ENCODE measurements at regions of chr13 and their contacts with region 1.

Region 1: GRCh38 chr13:23871616-23872220 is 17.5 kb downstream of the MIPEP start:
- DNase-seq: no peak
- H3K4me3 Mint-ChIP-seq: no peak overlapping the region
- H3K27ac Mint-ChIP-seq: no peak overlapping the region
- H3K4me1 Mint-ChIP-seq: no peaks in the 10 kb centered on the region
- H3K27me3 Mint-ChIP-seq: no peaks in the 10 kb centered on the region

Region 2: DNA sequence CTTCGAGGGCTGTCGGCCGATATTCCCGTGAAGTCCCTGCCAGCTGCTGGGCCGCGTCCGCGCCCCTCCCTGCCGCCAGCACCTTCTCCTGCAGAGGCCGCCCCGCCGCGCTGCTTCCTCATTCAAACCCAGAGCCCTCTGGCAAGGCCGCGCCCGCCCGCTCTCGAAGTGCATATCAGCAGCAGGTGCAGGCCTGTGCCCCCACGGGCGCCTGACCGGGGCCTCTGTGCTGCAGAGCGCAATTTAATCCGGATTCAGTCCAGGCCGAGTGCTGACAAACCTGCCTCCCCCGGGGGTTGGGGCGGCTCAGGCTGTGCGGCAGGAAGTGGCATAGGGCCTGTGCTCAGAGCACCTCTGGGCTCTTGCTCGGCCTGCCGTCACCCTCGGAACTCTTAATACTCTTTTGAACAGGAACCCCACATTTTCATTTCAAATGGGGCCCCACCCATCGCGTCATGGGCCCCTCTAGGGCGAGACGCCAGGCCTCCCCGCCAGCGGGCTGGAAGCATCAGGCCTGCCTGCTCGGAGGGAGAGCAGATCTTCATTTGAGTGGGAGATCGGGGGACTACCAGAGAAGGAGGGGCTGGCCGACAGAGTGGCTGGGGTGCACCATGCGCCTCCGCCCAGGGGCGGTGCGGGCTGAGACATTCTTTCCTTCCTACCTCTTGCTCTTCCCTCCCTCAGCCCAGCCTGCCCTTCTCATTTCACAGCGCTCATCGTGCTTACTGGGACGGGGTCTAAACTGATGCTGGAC is 175.8 kb before region 1 on chr13:
- intact Hi-C with region 1: no loop called
- DNase-seq: peak; percentile 49
- H3K4me3 Mint-ChIP-seq: peak overlapping the region; percentile 63
- H3K27ac Mint-ChIP-seq: peak overlapping the region; percentile 78
- H3K4me1 Mint-ChIP-seq: peaks cover 10% of the 10 kb centered on the region
- H3K27me3 Mint-ChIP-seq: no peaks in the 10 kb centered on the region

Region 3: GRCh38 chr13:23715762-23716235 is 155.9 kb before region 1 on chr13:
- intact Hi-C with region 1: loop called (anchors 5 kb)
- DNase-seq: no peak
- H3K4me3 Mint-ChIP-seq: no peak overlapping the region
- H3K27ac Mint-ChIP-seq: no peak overlapping the region
- H3K4me1 Mint-ChIP-seq: peaks cover 13% of the 10 kb centered on the region
- H3K27me3 Mint-ChIP-seq: peaks cover 19% of the 10 kb centered on the region

Region 4: GRCh38 chr13:23899555-23899954 is 27.8 kb after region 1 on chr13:
- intact Hi-C with region 1: loop called (anchors 2 kb)
- DNase-seq: no peak
- H3K4me3 Mint-ChIP-seq: no peak overlapping the region
- H3K27ac Mint-ChIP-seq: no peak overlapping the region
- H3K4me1 Mint-ChIP-seq: peaks cover 3% of the 10 kb centered on the region
- H3K27me3 Mint-ChIP-seq: peaks cover 33% of the 10 kb centered on the region

Measured in activated T-helper 2 cell treated with anti-CD3 and anti-CD28 coated beads, Interferon-gamma antibody, Interleukin-2, Interleukin-4, amounts not matched to agents 10 μg/mL and 5 μg/mL and 100 μg/mL, durations not matched to agents 14 hours and 24 hours and 36 hours (primary cell).